ENCODE measurements at regions of chr22 and their contacts with region 1.

Region 1: GRCh38 chr22:31661851-31662656 is at the start of gene PISD:
- DNase-seq: peak; percentile 98
- H3K4me3 ChIP-seq: peak within 1 kb of the TSS; percentile 86
- H3K27ac ChIP-seq: peak within 1 kb of the TSS; percentile 97
- H3K4me1 ChIP-seq: peaks cover 17% of the 10 kb centered on the region
- H3K27me3 ChIP-seq: no peaks in the 10 kb centered on the region
- total RNA-seq, gene PISD: 34.2 and 51.7 TPM in 2 replicates

Region 2: DNA sequence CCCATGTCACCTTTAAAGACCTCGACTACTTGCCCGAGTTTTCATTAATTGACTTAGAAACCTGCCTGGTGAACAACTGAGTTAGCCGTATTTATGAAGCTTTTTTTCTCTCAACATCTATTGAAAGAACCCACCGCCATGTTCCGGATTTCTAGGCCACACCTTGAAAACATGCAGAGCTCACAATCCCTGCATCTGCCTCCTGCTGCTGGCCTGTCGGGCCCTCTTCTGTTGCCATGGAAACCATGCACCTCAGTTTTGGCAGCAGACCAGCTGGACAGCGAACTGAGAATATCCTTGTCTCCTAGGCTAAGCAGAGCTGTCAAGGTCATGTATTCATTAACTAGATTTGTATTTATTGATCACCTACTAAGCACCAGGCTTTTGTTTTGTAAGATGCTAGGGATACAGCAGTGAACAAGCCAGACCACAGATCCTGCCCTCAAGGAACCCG is 311.6 kb before region 1 on chr22:
- in situ Hi-C with region 1: no loop called
- DNase-seq: peak; percentile 38
- H3K4me3 ChIP-seq: no peak overlapping the region
- H3K27ac ChIP-seq: no peak overlapping the region
- H3K4me1 ChIP-seq: peaks cover 9% of the 10 kb centered on the region; the same call in 1 of the 2 replicates
- H3K27me3 ChIP-seq: no peaks in the 10 kb centered on the region

Region 3: GRCh38 chr22:31969789-31970489 is 307.9 kb after region 1 on chr22:
- in situ Hi-C with region 1: loop called (anchors 10 kb)
- DNase-seq: peak; percentile 78
- H3K4me3 ChIP-seq: peak overlapping the region; percentile 69
- H3K27ac ChIP-seq: no peak overlapping the region
- H3K4me1 ChIP-seq: no peaks in the 10 kb centered on the region
- H3K27me3 ChIP-seq: no peaks in the 10 kb centered on the region

Measured in GM23248 (cell line).